ENCODE measurements at regions of chr4 and their contacts with region 1.

Region 1: GRCh38 chr4:87973283-87974169 is 2.0 kb upstream of the SPP1 start:
- DNase-seq: peak; percentile 51
- H3K4me3 Mint-ChIP-seq: no peak overlapping the region
- H3K27ac Mint-ChIP-seq: no peak overlapping the region
- H3K4me1 Mint-ChIP-seq: peaks cover 4% of the 10 kb centered on the region
- H3K27me3 Mint-ChIP-seq: peaks cover 33% of the 10 kb centered on the region

Region 2: GRCh38 chr4:87679449-87680169 is 293.9 kb before region 1 on chr4:
- CTCF ChIA-PET with region 1: interaction called, 3 read pairs
- POLR2A ChIA-PET with region 1: no interaction called
- intact Hi-C with region 1: loop called (anchors 10 kb)
- DNase-seq: peak; percentile 36
- H3K4me3 Mint-ChIP-seq: no peak overlapping the region
- H3K27ac Mint-ChIP-seq: no peak overlapping the region
- H3K4me1 Mint-ChIP-seq: no peaks in the 10 kb centered on the region
- H3K27me3 Mint-ChIP-seq: no peaks in the 10 kb centered on the region

Region 3: DNA sequence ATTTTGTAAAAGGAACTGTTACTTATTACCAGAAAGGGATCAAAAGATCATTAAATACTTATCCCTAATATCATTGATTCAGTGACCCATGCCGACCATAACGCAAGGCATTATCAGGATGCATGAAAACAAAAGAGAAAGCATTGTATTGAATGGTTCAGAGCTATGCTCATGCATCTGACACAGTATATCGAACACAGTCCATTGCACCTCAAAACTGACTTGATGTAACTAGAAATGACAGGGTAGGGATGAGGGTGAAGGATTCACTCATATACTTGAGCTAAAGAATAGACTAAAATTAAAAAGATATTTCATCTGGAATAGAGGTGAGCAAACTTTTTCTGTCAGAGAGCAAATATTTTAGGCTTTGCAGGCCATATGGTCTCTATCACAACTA is 11.1 kb before region 1 on chr4:
- CTCF ChIA-PET with region 1: interaction called, 10 read pairs
- POLR2A ChIA-PET with region 1: no interaction called
- intact Hi-C with region 1: no loop called
- DNase-seq: no peak
- H3K4me3 Mint-ChIP-seq: no peak overlapping the region
- H3K27ac Mint-ChIP-seq: no peak overlapping the region
- H3K4me1 Mint-ChIP-seq: no peaks in the 10 kb centered on the region
- H3K27me3 Mint-ChIP-seq: peaks cover 6% of the 10 kb centered on the region

Region 4: DNA sequence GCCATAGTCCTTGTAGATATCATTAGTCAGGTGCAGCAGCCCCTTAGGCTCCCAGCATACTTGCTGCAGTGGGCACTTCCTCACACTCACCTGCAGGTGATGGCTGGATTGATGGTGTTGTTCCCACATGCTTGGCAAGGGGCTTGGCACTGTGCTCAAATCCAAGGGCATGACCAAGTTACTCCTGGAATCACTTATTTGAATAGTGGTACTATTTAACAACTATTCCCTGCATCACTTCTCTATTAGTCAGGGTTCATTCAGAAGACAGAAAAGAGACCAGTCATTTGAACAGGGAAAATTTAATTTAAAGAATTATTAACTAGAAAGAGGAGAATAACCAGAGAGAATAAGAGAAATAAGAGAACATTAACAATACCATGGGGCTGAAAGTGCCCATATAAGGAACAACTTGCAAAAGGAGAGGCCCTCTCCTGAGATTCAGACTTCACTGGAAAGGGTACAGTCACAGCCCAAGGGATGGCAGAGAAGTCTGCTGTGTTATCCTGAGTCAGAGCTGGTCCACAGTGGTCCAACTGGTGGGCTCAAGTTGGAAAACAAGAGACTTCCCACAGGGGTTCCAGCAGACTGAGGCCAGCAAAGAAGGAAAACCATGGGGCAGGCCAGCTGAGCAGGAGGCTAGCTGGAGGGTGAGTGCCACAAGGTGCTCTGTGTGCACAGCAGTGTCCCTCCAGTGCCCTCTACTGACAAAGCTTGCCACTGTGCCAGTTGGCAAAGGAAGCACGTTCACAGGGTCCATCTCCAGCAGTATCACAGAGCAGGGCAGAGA is 11.8 kb after region 1 on chr4:
- CTCF ChIA-PET with region 1: interaction called, 30 read pairs
- POLR2A ChIA-PET with region 1: no interaction called
- intact Hi-C with region 1: no loop called
- DNase-seq: peak; percentile 58
- H3K4me3 Mint-ChIP-seq: no peak overlapping the region
- H3K27ac Mint-ChIP-seq: no peak overlapping the region
- H3K4me1 Mint-ChIP-seq: no peaks in the 10 kb centered on the region
- H3K27me3 Mint-ChIP-seq: peaks cover 27% of the 10 kb centered on the region

Region 5: DNA sequence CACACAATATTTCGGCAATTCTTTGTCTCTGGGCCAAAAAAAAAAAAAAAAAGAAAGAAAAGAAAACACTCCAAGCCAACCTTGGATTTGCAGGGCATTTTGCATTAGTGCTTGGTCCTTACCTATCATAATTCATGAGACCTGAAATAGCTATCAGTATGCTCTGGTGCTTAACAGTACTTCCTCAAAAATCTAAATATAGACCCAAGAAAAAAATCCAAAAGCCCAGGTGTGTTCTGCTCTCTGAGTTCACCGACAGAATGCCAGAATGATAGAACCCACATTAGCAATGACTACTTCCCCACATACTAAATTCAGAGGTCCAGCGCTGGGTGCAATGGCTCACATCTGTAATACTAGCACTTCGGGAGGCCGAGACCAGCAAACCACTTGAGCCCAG is 142.1 kb after region 1 on chr4:
- CTCF ChIA-PET with region 1: no interaction called
- POLR2A ChIA-PET with region 1: no interaction called
- intact Hi-C with region 1: no loop called
- DNase-seq: no peak
- H3K4me3 Mint-ChIP-seq: no peak overlapping the region
- H3K27ac Mint-ChIP-seq: no peak overlapping the region
- H3K4me1 Mint-ChIP-seq: no peaks in the 10 kb centered on the region
- H3K27me3 Mint-ChIP-seq: no peaks in the 10 kb centered on the region